K562 (cell line): ENCODE measurements at regions of chr1 and their contacts with region 1.

Region 1: DNA sequence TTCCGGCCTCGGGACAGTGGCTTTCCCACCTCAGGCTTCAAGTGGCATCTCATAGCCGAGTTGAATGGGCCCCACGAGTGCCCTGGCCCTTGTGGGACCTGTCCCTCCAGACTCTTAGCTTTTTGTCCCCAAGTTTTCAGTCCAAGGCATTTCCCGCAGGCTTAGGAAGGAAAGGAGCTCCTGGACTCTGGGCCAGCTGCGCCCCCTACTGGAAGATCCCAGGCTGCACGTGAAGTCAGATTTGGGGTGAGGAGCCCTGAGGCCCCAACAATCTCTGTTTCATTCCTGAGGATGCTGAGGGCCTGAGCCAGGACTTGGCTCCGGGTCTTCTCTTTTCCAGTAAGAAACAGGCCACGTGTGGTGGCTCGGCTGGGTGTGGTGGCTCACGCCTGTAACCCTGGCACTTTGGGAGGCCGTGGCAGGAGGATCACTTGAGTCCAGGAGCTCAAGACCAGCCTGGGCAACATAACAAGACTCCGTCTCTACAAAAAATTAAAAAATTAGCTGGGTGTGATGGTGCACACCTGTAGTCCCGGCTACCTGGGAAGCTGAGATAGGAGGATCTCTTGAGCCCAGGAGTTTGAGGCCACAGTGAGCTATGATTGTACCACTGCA is 67.4 kb downstream of the ARHGEF10L start:
- DNase-seq: peak; percentile 77 to 85 (median 83)
- ATAC-seq: peak; percentile 87
- H3K4me3 ChIP-seq: no peak overlapping the region
- H3K27ac ChIP-seq: no peak overlapping the region
- H3K4me1 ChIP-seq: no peaks in the 10 kb centered on the region
- H3K27me3 ChIP-seq: peaks cover 13 to 48% of the 10 kb centered on the region in 2 experiments; a peak in 3 of 5 replicates
- CTCF ChIP-seq: peak; percentile 88 to 97 (median 97)
- EP300 ChIP-seq: no peak
- POLR2A ChIP-seq: no peak
- RAD21 ChIP-seq: peak; percentile 65 to 88

Region 2: GRCh38 chr1:17287130-17287776 is 319.7 kb before region 1 on chr1:
- CTCF ChIA-PET with region 1: no interaction called
- POLR2A ChIA-PET with region 1: no interaction called
- in situ Hi-C with region 1: no loop called
- intact Hi-C with region 1: no loop called
- DNase-seq: no peak
- ATAC-seq: no peak
- H3K4me3 ChIP-seq: no peak overlapping the region
- H3K27ac ChIP-seq: no peak overlapping the region
- H3K4me1 ChIP-seq: peaks cover 2 to 3% of the 10 kb centered on the region in 2 experiments; a peak in 3 of 5 replicates
- H3K27me3 ChIP-seq: peaks cover 31 to 58% of the 10 kb centered on the region in 2 experiments
- CTCF ChIP-seq: no peak
- EP300 ChIP-seq: no peak
- POLR2A ChIP-seq: no peak
- RAD21 ChIP-seq: no peak

Region 3: DNA sequence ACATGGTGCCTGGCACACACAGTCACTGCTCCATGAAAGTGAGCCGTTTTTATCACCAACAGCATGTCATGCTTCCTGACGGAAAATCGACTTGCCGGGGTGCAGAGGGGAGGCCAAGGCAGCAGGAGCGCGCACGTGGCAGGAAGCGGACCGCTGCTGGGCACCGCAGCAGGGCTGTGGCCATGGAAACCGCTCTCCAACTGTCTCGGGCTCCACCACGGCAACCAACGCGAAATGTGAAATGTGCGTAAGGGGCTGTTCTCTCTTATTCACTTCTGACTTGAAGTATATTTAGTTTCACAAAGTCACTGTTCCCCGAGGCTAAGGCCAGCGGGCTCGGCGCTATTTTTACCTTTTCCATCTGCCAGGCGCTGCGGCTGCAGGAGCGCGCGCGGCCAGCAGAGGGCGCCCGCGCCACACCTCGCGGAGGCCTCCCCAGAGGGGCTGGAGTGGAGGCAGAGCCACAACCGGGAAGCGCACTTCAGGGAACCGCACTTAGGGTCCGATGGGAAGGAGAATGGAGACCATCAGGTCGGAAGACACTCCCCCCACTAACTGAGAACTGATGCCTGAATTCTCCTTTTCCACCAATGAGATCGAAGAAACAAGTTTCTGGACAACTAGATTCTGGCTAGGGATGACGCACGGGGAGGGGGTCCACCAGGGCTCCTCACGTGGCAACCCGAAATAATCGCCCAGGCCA is 187.2 kb before region 1 on chr1:
- CTCF ChIA-PET with region 1: interaction called, 24 read pairs
- POLR2A ChIA-PET with region 1: no interaction called
- in situ Hi-C with region 1: loop called (anchors 10 kb)
- intact Hi-C with region 1: no loop called
- DNase-seq: peak; percentile 78 to 86 (median 82)
- ATAC-seq: peak; percentile 91
- H3K4me3 ChIP-seq: no peak overlapping the region
- H3K27ac ChIP-seq: no peak overlapping the region
- H3K4me1 ChIP-seq: peaks cover 0 to 11% of the 10 kb centered on the region in 2 experiments; a peak in 3 of 5 replicates
- H3K27me3 ChIP-seq: no peaks in the 10 kb centered on the region
- CTCF ChIP-seq: peak; percentile 93 to 99 (median 96)
- EP300 ChIP-seq: no peak
- POLR2A ChIP-seq: peak; percentile 46
- RAD21 ChIP-seq: peak; percentile 80 to 86

Region 4: DNA sequence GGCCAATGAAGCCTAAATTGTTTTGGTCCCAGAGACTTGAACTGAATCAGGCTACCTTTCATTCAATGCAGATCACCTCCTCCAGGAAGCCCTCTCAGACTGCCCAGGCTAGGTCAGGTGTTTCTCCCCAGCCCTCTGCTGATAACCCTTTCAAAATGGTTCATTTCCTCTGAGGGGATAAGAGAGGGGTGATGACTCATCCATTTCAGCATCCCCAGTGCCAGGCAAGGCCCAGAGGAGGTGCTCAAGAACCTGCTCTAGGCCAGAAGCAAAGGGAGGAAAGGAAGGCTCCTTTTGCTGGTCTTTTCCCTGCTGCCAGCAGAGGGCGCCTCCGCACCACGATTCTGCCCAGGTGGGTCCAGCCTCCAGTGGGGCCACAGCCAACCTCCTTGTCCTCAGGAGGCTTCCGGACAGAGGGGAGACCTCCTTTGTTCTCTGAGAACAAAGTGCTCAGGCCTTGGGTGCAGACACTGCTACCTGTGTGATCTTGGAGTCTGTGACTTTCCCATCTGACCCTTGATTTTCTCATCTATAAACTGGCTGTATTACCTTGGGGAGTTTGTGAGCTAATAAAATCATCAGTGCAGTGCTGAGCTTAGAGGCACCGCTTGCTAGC is 112.7 kb before region 1 on chr1:
- CTCF ChIA-PET with region 1: interaction called, 13 read pairs
- POLR2A ChIA-PET with region 1: interaction called, 3 read pairs
- in situ Hi-C with region 1: no loop called
- intact Hi-C with region 1: loop called (anchors 1 kb)
- DNase-seq: peak; percentile 87 to 92 (median 90)
- ATAC-seq: peak; percentile 96
- H3K4me3 ChIP-seq: no peak overlapping the region
- H3K27ac ChIP-seq: no peak overlapping the region
- H3K4me1 ChIP-seq: peaks cover 0 to 3% of the 10 kb centered on the region in 2 experiments; a peak in 3 of 5 replicates
- H3K27me3 ChIP-seq: peaks cover 7 to 9% of the 10 kb centered on the region in 2 experiments; a peak in 4 of 5 replicates
- CTCF ChIP-seq: peak; percentile 98 to 99 (median 98)
- EP300 ChIP-seq: peak; percentile 21; the same call in 1 of the 2 replicates
- POLR2A ChIP-seq: no peak
- RAD21 ChIP-seq: peak; percentile 59 to 96

Region 5: GRCh38 chr1:17502326-17502778 is 104.6 kb before region 1 on chr1:
- CTCF ChIA-PET with region 1: interaction called, 26 read pairs
- POLR2A ChIA-PET with region 1: interaction called, 4 read pairs
- in situ Hi-C with region 1: loop called (anchors 5 kb)
- intact Hi-C with region 1: loop called (anchors 1 kb)
- DNase-seq: peak; percentile 79 to 88 (median 84)
- ATAC-seq: peak; percentile 100
- H3K4me3 ChIP-seq: no peak overlapping the region
- H3K27ac ChIP-seq: no peak overlapping the region
- H3K4me1 ChIP-seq: no peaks in the 10 kb centered on the region
- H3K27me3 ChIP-seq: peaks cover 22 to 37% of the 10 kb centered on the region in 2 experiments; a peak in 4 of 5 replicates
- CTCF ChIP-seq: peak; percentile 91 to 96 (median 93)
- EP300 ChIP-seq: no peak
- POLR2A ChIP-seq: no peak
- RAD21 ChIP-seq: peak; percentile 60 to 92

Region 6: GRCh38 chr1:17587989-17588685 is 18.8 kb before region 1 on chr1:
- CTCF ChIA-PET with region 1: no interaction called
- POLR2A ChIA-PET with region 1: no interaction called
- in situ Hi-C with region 1: no loop called
- intact Hi-C with region 1: no loop called
- DNase-seq: no peak
- ATAC-seq: peak; percentile 26; the same call in 1 of the 3 replicates
- H3K4me3 ChIP-seq: no peak overlapping the region
- H3K27ac ChIP-seq: no peak overlapping the region
- H3K4me1 ChIP-seq: no peaks in the 10 kb centered on the region
- H3K27me3 ChIP-seq: peaks cover 14 to 70% of the 10 kb centered on the region in 2 experiments
- CTCF ChIP-seq: no peak
- EP300 ChIP-seq: no peak
- POLR2A ChIP-seq: no peak
- RAD21 ChIP-seq: no peak

Region 7: GRCh38 chr1:17819129-17819802 is 212.3 kb after region 1 on chr1:
- CTCF ChIA-PET with region 1: no interaction called
- POLR2A ChIA-PET with region 1: no interaction called
- in situ Hi-C with region 1: no loop called
- intact Hi-C with region 1: no loop called
- DNase-seq: no peak
- ATAC-seq: no peak
- H3K4me3 ChIP-seq: no peak overlapping the region
- H3K27ac ChIP-seq: no peak overlapping the region
- H3K4me1 ChIP-seq: no peaks in the 10 kb centered on the region
- H3K27me3 ChIP-seq: peaks cover 14 to 19% of the 10 kb centered on the region in 2 experiments
- CTCF ChIP-seq: no peak
- EP300 ChIP-seq: no peak
- POLR2A ChIP-seq: no peak
- RAD21 ChIP-seq: no peak